ENCODE measurements at regions of chr1 and their contacts with region 1.

Region 1: DNA sequence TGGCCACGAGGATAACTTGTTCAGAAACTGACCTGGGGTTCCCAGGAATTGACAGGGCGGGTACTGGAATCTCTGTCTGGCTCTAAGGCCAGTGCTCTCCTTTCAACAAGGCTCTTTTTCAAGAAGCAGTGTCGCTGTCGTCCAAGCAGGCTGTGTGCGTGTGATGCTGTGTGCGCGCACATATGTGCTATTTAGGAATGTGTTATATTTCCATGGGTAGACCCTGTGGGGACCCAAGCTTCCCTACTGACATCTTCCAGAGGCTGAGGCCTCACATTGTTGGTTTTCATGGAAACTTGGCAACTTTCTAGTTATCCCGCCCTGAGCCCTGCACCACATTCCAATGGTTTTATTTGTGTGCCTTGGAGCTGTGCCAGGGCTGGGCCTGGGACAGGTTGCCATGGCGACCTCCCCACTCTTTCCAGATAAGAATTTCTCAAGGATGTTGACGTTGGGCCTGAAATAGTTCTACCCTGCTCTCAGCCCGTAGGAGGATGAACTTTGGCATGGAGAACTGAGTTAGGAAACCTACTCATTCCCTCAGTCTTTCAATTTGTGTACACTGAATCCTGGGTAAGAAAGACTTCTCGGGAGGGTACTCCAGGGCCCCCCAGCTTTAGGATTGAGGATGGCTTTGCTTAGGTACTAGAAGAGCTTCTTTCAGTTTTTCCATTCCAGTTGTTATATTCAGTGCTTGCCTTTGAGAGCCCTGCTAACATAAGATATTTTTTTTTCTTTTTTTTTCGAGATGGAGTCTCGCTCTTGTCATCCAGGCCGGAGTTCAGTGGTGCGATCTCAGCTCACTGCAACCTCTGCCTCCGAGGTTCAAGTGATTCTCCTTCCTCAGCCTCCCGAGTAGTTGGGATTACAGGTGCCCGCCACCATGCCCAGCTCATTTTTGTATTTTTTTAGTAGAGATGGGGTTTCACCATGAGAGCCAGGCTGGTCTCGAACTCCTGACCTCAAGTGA is 38.8 kb upstream of the SRSF10 start:
- DNase-seq: peak; percentile 95
- H3K4me3 ChIP-seq: no peak overlapping the region
- H3K27ac ChIP-seq: peak overlapping the region; percentile 89
- H3K4me1 ChIP-seq: peaks cover 33% of the 10 kb centered on the region
- H3K27me3 ChIP-seq: no peaks in the 10 kb centered on the region
- CTCF ChIP-seq: no peak

Region 2: GRCh38 chr1:23809751-23810171 is 209.1 kb before region 1 on chr1:
- CTCF ChIA-PET with region 1: no interaction called
- dilution Hi-C with region 1: no loop called
- in situ Hi-C with region 1: no loop called
- intact Hi-C with region 1: loop called (anchors 5 kb)
- DNase-seq: peak; percentile 45
- H3K4me3 ChIP-seq: no peak overlapping the region
- H3K27ac ChIP-seq: no peak overlapping the region
- H3K4me1 ChIP-seq: no peaks in the 10 kb centered on the region
- H3K27me3 ChIP-seq: no peaks in the 10 kb centered on the region
- CTCF ChIP-seq: peak; percentile 91

Region 3: DNA sequence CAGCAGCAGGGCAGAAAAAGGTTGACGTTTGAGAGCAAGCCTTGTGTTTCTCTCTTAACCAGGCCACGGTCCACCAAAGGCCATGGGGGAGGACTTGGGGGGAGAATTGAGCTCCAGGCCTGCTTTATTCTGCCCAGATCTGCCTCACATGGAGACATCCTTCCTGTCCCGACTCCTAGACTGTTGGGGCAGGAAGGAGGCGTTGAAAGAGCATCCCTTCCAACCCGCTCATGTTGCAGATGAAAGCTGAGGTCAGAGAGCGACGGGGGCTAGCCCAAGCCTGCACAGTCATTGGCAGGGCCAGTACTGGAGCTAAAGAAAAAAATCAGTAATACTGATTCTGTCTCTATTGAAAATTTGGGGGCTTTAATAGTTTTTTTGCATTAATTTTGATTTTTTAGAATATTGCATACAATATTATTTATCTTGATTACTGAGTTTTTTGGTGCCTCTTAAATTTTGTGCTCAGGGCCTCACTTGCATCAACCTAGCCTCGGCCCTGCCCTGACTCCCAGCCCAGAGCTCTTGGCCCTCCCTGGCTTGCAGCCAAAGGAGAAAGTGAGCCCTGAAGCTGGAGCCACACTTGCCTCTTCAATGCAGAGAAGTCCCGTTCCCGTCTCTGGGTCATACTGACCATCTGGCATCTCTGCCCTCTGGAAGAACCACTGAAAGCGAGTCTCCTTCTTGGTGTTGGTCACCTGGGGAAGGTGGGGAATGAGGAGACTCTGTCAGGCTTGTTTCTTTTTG is 46.6 kb after region 1 on chr1:
- CTCF ChIA-PET with region 1: no interaction called
- dilution Hi-C with region 1: loop called (anchors 5 kb)
- in situ Hi-C with region 1: no loop called
- intact Hi-C with region 1: no loop called
- DNase-seq: no peak
- H3K4me3 ChIP-seq: no peak overlapping the region
- H3K27ac ChIP-seq: no peak overlapping the region
- H3K4me1 ChIP-seq: no peaks in the 10 kb centered on the region
- H3K27me3 ChIP-seq: no peaks in the 10 kb centered on the region
- CTCF ChIP-seq: no peak

Measured in mammary epithelial cell (primary cell).